Heart right ventricle (tissue), 16 donors: ENCODE measurements at regions of chr12 and their contacts with region 1.

Region 1: DNA sequence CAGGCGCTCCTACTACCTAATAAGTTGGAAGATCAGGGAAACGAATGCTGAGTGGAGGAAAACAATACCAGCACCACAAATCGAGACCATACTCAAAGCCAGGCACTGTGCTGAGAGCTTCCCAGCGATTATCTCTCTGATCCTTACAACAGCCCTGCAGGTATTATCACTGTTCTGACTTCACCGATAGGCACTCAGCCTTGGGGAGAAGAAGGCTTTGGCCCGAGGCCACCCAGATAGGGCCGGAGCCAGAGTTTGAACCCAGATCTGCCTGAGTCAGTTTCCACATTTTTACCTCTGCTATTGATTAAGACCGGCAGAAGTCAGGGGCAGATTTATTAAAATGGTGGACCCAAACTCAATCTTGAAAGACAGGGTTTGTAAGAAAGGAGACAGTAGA is 4.9 kb downstream of the SVOP start:
- DNase-seq: no peak
- ATAC-seq: no peak
- H3K4me3 ChIP-seq: no peak overlapping the region
- H3K27ac ChIP-seq: no peak overlapping the region
- H3K4me1 ChIP-seq: peaks cover 0 to 8% (median 0%) of the 10 kb centered on the region in 9 donors
- H3K27me3 ChIP-seq: peaks cover 0 to 16% (median 0%) of the 10 kb centered on the region in 7 donors
- CTCF ChIP-seq: no peak

Region 2: DNA sequence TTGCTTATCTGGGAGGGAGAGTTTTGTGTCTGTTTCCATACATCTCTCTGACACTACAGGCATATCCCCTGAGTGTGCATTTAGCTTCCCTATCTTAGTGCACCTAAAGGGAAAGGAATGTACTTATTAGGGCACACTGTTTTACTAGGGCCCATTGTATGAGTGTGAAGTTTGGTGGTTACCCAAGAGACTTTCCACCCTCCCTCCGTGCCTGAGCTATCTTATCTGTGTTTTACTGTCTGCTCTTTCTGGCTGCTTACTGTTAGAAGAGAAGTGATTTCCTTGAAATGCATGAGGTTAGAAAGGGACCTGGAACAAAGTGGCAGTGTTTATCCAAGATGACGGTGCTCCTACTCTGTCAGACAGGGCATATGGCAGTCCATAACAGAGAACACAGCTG is 13.4 kb after region 1 on chr12:
- intact Hi-C with region 1: loop called in 1 of 10 experiments (anchors 1 kb)
- DNase-seq: no peak
- ATAC-seq: peak in 1 of 8 donors; percentile 55
- H3K4me3 ChIP-seq: no peak overlapping the region
- H3K27ac ChIP-seq: peak overlapping the region in 1 of 10 donors; percentile 30
- H3K4me1 ChIP-seq: no peaks in the 10 kb centered on the region
- H3K27me3 ChIP-seq: peaks cover 0 to 4% (median 0%) of the 10 kb centered on the region in 7 donors
- CTCF ChIP-seq: no peak